ENCODE measurements at regions of chr5 and their contacts with region 1.

Region 1: GRCh38 chr5:68215208-68215897 is at the start of gene PIK3R1:
- DNase-seq: peak; percentile 97 to 98
- ATAC-seq: peak; percentile 90 to 97 (median 96)
- H3K4me3 ChIP-seq: peak within 1 kb of the TSS; percentile 95
- H3K27ac ChIP-seq: peak within 1 kb of the TSS; percentile 99
- H3K4me1 ChIP-seq: peaks cover 24% of the 10 kb centered on the region
- H3K27me3 ChIP-seq: no peaks in the 10 kb centered on the region
- CTCF ChIP-seq: peak; percentile 50
- total RNA-seq, gene PIK3R1: 102 to 155 (median 140) TPM

Region 2: GRCh38 chr5:67620424-67621397 is 594.6 kb before region 1 on chr5:
- intact Hi-C with region 1: loop called in 1 of 2 experiments (anchors 10 kb)
- DNase-seq: no peak
- ATAC-seq: peak in 3 of 4 donors; percentile 68 to 88 (median 81)
- H3K4me3 ChIP-seq: no peak overlapping the region
- H3K27ac ChIP-seq: peak overlapping the region; percentile 24
- H3K4me1 ChIP-seq: peaks cover 19% of the 10 kb centered on the region
- H3K27me3 ChIP-seq: no peaks in the 10 kb centered on the region
- CTCF ChIP-seq: no peak

Region 3: DNA sequence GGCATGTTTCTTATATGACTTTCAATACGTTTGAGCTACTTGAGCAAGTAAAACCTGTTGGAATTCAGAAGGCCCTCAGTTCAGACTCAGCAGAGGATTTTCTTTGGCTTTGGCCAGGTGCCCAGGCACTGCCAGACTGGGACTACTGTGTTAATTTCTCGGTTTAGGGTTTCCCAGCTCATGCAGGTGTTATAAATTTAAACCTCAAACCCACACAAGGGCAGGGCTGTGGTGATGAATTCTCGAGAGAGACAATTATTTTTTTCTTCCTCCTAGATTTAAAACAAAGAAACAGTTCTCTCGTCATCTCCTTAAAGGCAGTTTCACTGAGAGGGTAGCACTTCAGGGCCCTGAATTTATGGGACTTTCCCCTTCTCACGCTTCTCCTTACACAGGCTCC is 405.8 kb before region 1 on chr5:
- intact Hi-C with region 1: loop called in 1 of 2 experiments (anchors 10 kb)
- DNase-seq: no peak
- ATAC-seq: no peak
- H3K4me3 ChIP-seq: no peak overlapping the region
- H3K27ac ChIP-seq: peak overlapping the region; percentile 88
- H3K4me1 ChIP-seq: peaks cover 37% of the 10 kb centered on the region
- H3K27me3 ChIP-seq: no peaks in the 10 kb centered on the region
- CTCF ChIP-seq: no peak

Region 4: DNA sequence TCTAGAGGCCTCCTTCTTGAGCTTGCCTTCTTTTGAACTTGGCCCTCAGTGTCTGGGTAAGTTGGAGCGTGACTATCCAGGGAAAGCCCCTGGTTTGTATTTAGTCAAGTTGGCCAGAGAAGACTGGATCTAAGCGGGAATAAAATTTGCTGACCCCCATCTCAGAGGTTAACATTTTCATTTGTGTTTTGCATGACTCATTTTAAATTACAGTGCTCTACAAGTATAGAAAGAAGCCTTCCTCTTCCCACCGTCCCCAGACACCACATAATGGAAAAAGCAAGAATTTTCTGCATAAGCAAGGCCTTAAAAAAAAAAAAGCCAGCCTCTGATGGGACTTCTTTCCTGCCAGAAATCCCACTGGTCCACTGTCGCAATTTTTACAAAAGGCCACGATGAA is 27.4 kb after region 1 on chr5:
- intact Hi-C with region 1: loop called in 1 of 2 experiments (anchors 2 kb)
- DNase-seq: no peak
- ATAC-seq: peak in 3 of 4 donors; percentile 2 to 56 (median 23)
- H3K4me3 ChIP-seq: no peak overlapping the region
- H3K27ac ChIP-seq: peak overlapping the region; percentile 58
- H3K4me1 ChIP-seq: peaks cover 54% of the 10 kb centered on the region
- H3K27me3 ChIP-seq: no peaks in the 10 kb centered on the region
- CTCF ChIP-seq: no peak

Measured in psoas muscle (tissue), 8 donors.